ENCODE measurements at regions of chr15 and their contacts with region 1.

Region 1: DNA sequence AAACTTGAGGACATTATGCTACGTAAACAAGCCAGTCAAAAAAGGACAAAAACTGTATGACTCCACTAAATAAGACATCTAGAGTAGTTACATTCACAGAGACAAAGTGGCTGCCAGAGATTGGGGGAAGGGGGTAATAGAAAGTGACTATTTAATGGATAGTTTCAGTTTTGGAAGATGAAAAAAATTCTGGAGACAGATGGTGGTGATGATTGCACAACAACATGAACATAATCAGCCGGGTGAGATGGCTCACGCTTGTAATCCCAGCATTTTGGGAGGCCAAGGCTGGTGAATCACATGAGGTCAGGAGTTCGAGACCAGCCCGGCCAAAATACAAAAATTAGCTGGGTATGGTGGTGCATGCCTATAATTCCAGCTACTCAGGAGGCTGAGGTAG is 40.6 kb downstream of the DPP8 start:
- DNase-seq: no peak
- H3K4me3 ChIP-seq: no peak overlapping the region
- H3K27ac ChIP-seq: no peak overlapping the region
- H3K4me1 ChIP-seq: no peaks in the 10 kb centered on the region
- H3K27me3 ChIP-seq: no peaks in the 10 kb centered on the region
- CTCF ChIP-seq: no peak
- POLR2A ChIP-seq: no peak

Region 2: GRCh38 chr15:65460741-65461347 is 16.1 kb before region 1 on chr15:
- intact Hi-C with region 1: loop called (anchors 2 kb)
- DNase-seq: no peak
- H3K4me3 ChIP-seq: no peak overlapping the region
- H3K27ac ChIP-seq: no peak overlapping the region
- H3K4me1 ChIP-seq: no peaks in the 10 kb centered on the region
- H3K27me3 ChIP-seq: no peaks in the 10 kb centered on the region
- CTCF ChIP-seq: no peak
- POLR2A ChIP-seq: no peak

Region 3: GRCh38 chr15:65530314-65531122 is 53.6 kb after region 1 on chr15 and contains the start of gene HACD3:
- intact Hi-C with region 1: no loop called
- DNase-seq: peak; percentile 85
- H3K4me3 ChIP-seq: peak within 1 kb of the TSS; percentile 72 to 74
- H3K27ac ChIP-seq: peak within 1 kb of the TSS; percentile 68 to 83
- H3K4me1 ChIP-seq: no peaks in the 10 kb centered on the region
- H3K27me3 ChIP-seq: no peaks in the 10 kb centered on the region
- CTCF ChIP-seq: no peak
- POLR2A ChIP-seq: no peak
- total RNA-seq, gene HACD3: 37.5 to 38.6 TPM

Region 4: DNA sequence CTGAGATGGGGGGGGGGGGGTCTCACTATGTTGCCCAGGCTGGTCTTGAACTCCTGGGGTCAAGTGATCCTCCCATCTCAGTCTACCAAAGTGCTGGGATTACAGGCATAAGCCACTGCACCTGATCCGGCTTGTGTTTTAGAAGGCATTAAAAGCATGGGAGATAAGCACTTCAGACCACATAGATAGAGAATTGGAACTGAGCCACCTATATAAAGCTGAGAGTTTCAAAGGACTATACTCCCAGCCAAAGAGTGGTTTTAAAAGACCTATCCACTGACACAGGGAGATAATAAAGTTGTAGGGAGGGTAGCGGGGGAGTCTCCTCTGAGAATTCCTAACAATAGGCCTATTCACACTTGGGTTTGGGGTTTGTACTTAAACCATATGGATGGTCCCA is 280.4 kb after region 1 on chr15:
- intact Hi-C with region 1: no loop called
- DNase-seq: peak; percentile 59
- H3K4me3 ChIP-seq: no peak overlapping the region
- H3K27ac ChIP-seq: no peak overlapping the region
- H3K4me1 ChIP-seq: no peaks in the 10 kb centered on the region
- H3K27me3 ChIP-seq: no peaks in the 10 kb centered on the region
- CTCF ChIP-seq: no peak
- POLR2A ChIP-seq: no peak